CD8-positive, alpha-beta T cell (primary cell): ENCODE measurements at regions of chr22 and their contacts with region 1.

Region 1: DNA sequence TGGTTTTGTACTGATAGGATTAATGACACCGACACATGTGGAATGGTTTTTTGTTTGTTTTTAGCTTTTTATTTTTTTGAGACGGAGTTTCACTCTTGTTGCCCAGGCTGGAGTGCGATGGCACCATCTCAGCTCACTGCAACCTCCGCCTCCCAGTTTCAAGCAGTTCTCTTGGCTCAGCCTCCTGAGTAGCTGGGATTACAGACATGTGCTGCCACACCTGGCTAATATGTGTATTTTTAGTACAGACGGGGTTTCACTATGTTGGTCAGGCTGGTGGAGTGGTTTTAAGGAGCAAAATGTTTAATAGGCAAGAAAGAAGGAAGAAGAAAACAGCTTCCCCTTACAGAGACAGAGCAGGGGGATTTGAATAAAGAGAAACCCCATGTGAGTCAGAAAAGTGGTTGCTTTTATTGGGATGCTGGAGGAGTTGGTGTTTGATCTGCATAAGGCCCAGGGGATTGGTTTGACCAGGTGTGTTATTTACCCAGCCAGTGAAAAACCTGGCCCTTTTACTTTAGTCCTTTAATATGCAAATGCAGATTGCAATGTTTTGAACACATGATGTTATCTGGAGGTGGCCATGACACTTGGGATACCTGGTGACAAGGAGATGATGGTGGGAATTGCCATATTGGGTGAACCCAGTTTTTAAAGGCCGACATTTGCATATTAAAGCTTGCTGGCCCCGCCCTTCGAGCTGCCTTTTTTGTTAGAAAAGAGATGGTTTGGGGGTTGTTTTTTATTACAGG is 24.3 kb downstream of the SUSD2 start:
- DNase-seq: no peak
- ATAC-seq: no peak
- H3K4me3 ChIP-seq: no peak overlapping the region
- H3K4me3 Mint-ChIP-seq: no peak overlapping the region
- H3K27ac ChIP-seq: no peak overlapping the region
- H3K27ac Mint-ChIP-seq: no peak overlapping the region
- H3K4me1 ChIP-seq: peaks cover 10% of the 10 kb centered on the region
- H3K4me1 Mint-ChIP-seq: peaks cover 19% of the 10 kb centered on the region
- H3K27me3 ChIP-seq: no peaks in the 10 kb centered on the region
- H3K27me3 Mint-ChIP-seq: peaks cover 2% of the 10 kb centered on the region
- CTCF ChIP-seq: no peak

Region 2: GRCh38 chr22:23997092-23997491 is 208.5 kb before region 1 on chr22:
- CTCF ChIA-PET with region 1: no interaction called
- POLR2A ChIA-PET with region 1: no interaction called
- intact Hi-C with region 1: no loop called
- DNase-seq: no peak
- ATAC-seq: no peak
- H3K4me3 ChIP-seq: no peak overlapping the region
- H3K4me3 Mint-ChIP-seq: no peak overlapping the region
- H3K27ac ChIP-seq: no peak overlapping the region
- H3K27ac Mint-ChIP-seq: no peak overlapping the region
- H3K4me1 ChIP-seq: no peaks in the 10 kb centered on the region
- H3K4me1 Mint-ChIP-seq: no peaks in the 10 kb centered on the region
- H3K27me3 ChIP-seq: peaks cover 0 to 3% of the 10 kb centered on the region in 2 experiments
- H3K27me3 Mint-ChIP-seq: no peaks in the 10 kb centered on the region
- CTCF ChIP-seq: no peak

Region 3: DNA sequence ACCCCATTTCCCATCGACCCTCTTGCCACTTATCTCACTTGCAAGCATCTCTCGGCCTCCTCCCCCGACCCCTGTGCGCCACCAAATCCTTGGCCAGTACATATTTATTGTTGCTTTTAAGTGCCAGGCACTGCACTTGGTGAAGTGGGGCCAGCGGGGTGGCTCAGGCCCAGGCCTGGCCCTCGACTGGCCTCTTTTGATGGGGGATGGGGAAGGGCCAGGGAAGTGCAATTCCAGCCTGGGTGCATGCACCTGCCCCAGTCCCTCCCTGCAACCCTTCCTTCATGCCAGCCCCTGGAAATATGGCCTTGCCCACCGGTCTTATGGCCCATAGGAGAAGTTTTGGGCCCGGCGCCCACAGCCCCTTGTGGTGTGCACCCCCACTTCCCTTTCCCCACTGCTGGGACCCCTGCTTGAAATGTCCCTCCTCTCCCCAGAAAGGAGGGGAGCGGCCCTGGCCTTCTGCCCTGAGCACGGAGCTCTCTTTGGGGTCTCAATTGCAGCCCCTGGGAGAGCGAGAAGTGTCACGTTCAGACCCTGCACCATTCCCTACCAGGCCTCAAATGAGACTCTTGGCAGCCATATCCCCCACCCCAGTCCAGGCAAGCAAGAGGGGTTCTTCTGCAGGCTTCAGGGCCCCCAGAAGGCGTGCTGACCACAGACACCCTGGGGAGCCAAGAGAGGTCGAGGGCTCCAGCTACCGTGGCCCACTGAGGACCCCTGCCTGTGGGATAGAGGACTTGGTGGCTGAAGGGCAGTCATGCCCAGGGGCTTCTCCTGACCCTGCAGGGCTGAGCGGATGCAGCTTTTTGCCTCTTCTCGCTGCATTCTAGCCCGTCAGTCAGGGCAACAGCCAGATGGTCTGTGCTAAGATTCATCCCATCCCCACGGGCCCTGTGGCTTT is 23.4 kb before region 1 on chr22:
- CTCF ChIA-PET with region 1: interaction called, 3 read pairs
- POLR2A ChIA-PET with region 1: no interaction called
- intact Hi-C with region 1: loop called in 1 of 2 experiments (anchors 1 kb)
- DNase-seq: peak in 3 of 9 experiments; percentile 19 to 32 (median 25)
- ATAC-seq: no peak
- H3K4me3 ChIP-seq: no peak overlapping the region
- H3K4me3 Mint-ChIP-seq: no peak overlapping the region
- H3K27ac ChIP-seq: no peak overlapping the region
- H3K27ac Mint-ChIP-seq: no peak overlapping the region
- H3K4me1 ChIP-seq: no peaks in the 10 kb centered on the region
- H3K4me1 Mint-ChIP-seq: peaks cover 2% of the 10 kb centered on the region
- H3K27me3 ChIP-seq: no peaks in the 10 kb centered on the region
- H3K27me3 Mint-ChIP-seq: no peaks in the 10 kb centered on the region
- CTCF ChIP-seq: no peak

Region 4: GRCh38 chr22:24216541-24217209 is 11.1 kb after region 1 on chr22:
- CTCF ChIA-PET with region 1: no interaction called
- POLR2A ChIA-PET with region 1: no interaction called
- intact Hi-C with region 1: no loop called
- DNase-seq: peak in 1 of 9 experiments; percentile 38
- ATAC-seq: peak; percentile 59
- H3K4me3 ChIP-seq: no peak overlapping the region
- H3K4me3 Mint-ChIP-seq: no peak overlapping the region
- H3K27ac ChIP-seq: no peak overlapping the region
- H3K27ac Mint-ChIP-seq: peak overlapping the region; percentile 57
- H3K4me1 ChIP-seq: no peaks in the 10 kb centered on the region
- H3K4me1 Mint-ChIP-seq: peaks cover 7% of the 10 kb centered on the region
- H3K27me3 ChIP-seq: no peaks in the 10 kb centered on the region
- H3K27me3 Mint-ChIP-seq: no peaks in the 10 kb centered on the region
- CTCF ChIP-seq: no peak

Region 5: GRCh38 chr22:24402460-24403192 is 197.0 kb after region 1 on chr22:
- CTCF ChIA-PET with region 1: no interaction called
- POLR2A ChIA-PET with region 1: no interaction called
- intact Hi-C with region 1: no loop called
- DNase-seq: peak in 1 of 9 experiments; percentile 38
- ATAC-seq: no peak
- H3K4me3 ChIP-seq: no peak overlapping the region
- H3K4me3 Mint-ChIP-seq: no peak overlapping the region
- H3K27ac ChIP-seq: no peak overlapping the region
- H3K27ac Mint-ChIP-seq: no peak overlapping the region
- H3K4me1 ChIP-seq: peaks cover 19% of the 10 kb centered on the region
- H3K4me1 Mint-ChIP-seq: peaks cover 23% of the 10 kb centered on the region
- H3K27me3 ChIP-seq: no peaks in the 10 kb centered on the region
- H3K27me3 Mint-ChIP-seq: no peaks in the 10 kb centered on the region
- CTCF ChIP-seq: no peak

Region 6: DNA sequence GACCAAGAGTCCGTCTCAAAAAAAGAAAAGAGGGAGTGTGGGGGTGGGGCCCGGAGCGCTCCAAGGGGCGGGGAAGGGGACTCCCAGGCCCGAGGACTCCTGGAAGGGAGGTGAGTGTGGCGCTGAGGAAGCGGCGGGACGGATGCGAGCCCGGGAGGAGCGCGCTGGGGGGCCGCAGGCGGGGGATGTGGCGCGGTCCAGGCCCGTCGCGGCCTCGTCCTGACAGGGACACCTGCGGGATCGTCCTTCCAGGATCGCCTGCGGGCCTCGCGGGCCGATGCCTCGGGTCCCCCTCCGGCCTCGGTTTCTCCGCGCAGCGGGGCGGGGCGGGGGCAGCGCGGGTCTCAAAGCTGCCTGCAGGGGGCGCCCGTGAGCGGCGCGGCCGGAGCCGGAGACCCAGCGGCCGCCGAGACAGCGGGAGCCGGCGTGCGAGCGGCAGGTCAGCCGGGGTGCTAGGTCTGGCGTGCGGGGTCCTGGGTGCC is 217.9 kb after region 1 on chr22:
- CTCF ChIA-PET with region 1: no interaction called
- POLR2A ChIA-PET with region 1: no interaction called
- intact Hi-C with region 1: no loop called
- DNase-seq: peak; percentile 33 to 82 (median 60)
- ATAC-seq: no peak
- H3K4me3 ChIP-seq: peak overlapping the region in 1 of 2 experiments; percentile 47
- H3K4me3 Mint-ChIP-seq: peak overlapping the region; percentile 72
- H3K27ac ChIP-seq: no peak overlapping the region
- H3K27ac Mint-ChIP-seq: no peak overlapping the region
- H3K4me1 ChIP-seq: peaks cover 32% of the 10 kb centered on the region
- H3K4me1 Mint-ChIP-seq: peaks cover 39% of the 10 kb centered on the region
- H3K27me3 ChIP-seq: no peaks in the 10 kb centered on the region
- H3K27me3 Mint-ChIP-seq: no peaks in the 10 kb centered on the region
- CTCF ChIP-seq: peak; percentile 89